ENCODE measurements at regions of chrX and their contacts with region 1.

Region 1: DNA sequence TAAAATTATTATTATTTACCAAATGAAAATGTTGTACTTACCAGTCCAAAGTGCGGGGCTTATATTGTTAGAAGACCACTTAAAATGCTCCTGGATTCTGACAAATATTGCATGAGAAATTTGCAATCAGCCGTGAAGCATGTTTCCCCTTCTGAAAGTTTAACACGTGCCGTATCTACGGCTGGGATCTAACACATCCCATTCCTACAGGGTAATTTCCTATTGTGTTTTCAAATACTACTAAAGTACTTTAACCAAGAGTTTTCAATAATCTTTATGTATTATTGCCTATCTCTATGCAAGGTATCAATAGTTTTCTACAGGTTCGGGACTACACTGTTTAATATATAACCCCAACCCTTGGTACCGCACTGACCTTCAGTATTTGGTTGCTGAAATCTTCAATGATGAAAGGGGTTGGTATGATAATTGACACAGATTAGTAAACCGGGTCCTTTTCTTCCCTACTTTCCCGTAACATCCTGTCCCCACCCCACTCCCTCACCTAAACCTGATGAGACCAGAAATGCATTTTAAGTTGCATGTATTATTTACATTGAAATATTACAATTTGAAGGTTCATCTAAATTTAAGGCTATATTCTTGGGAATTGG is 795 bp upstream of the BRWD3 start:
- DNase-seq: no peak
- ATAC-seq: no peak
- H3K4me3 ChIP-seq: peak overlapping the region; percentile 73
- H3K27ac ChIP-seq: peak overlapping the region; percentile 83
- H3K4me1 ChIP-seq: no peaks in the 10 kb centered on the region
- H3K27me3 ChIP-seq: peaks cover 0 to 3% (median 0%) of the 10 kb centered on the region in 3 donors
- CTCF ChIP-seq: no peak

Region 2: GRCh38 chrX:81121513-81122382 is 311.3 kb after region 1 on chrX:
- intact Hi-C with region 1: loop called in 1 of 2 experiments (anchors 2 kb)
- DNase-seq: peak; percentile 87 to 91
- ATAC-seq: peak; percentile 95 to 99 (median 98)
- H3K4me3 ChIP-seq: peak overlapping the region; percentile 68
- H3K27ac ChIP-seq: no peak overlapping the region
- H3K4me1 ChIP-seq: no peaks in the 10 kb centered on the region
- H3K27me3 ChIP-seq: no peaks in the 10 kb centered on the region
- CTCF ChIP-seq: no peak

Measured in psoas muscle (tissue), 8 donors.